ENCODE measurements at regions of chrX and their contacts with region 1.

Region 1: GRCh38 chrX:73855546-73855945 is 292.5 kb downstream of the CHIC1 start:
- DNase-seq: peak; percentile 52 to 54
- H3K4me3 ChIP-seq: no peak overlapping the region
- H3K27ac ChIP-seq: no peak overlapping the region
- H3K4me1 ChIP-seq: no peaks in the 10 kb centered on the region
- H3K27me3 ChIP-seq: no peaks in the 10 kb centered on the region
- CTCF ChIP-seq: peak in 5 of 6 experiments; percentile 42 to 83 (median 61)
- POLR2A ChIP-seq: no peak

Region 2: GRCh38 chrX:73668779-73669178 is 186.8 kb before region 1 on chrX:
- intact Hi-C with region 1: no loop called
- DNase-seq: peak; percentile 86 to 89
- H3K4me3 ChIP-seq: no peak overlapping the region
- H3K27ac ChIP-seq: peak overlapping the region; percentile 40 to 74 (median 56)
- H3K4me1 ChIP-seq: peaks cover 3 to 19% of the 10 kb centered on the region in 2 donors
- H3K27me3 ChIP-seq: no peaks in the 10 kb centered on the region
- CTCF ChIP-seq: no peak
- POLR2A ChIP-seq: no peak

Region 3: DNA sequence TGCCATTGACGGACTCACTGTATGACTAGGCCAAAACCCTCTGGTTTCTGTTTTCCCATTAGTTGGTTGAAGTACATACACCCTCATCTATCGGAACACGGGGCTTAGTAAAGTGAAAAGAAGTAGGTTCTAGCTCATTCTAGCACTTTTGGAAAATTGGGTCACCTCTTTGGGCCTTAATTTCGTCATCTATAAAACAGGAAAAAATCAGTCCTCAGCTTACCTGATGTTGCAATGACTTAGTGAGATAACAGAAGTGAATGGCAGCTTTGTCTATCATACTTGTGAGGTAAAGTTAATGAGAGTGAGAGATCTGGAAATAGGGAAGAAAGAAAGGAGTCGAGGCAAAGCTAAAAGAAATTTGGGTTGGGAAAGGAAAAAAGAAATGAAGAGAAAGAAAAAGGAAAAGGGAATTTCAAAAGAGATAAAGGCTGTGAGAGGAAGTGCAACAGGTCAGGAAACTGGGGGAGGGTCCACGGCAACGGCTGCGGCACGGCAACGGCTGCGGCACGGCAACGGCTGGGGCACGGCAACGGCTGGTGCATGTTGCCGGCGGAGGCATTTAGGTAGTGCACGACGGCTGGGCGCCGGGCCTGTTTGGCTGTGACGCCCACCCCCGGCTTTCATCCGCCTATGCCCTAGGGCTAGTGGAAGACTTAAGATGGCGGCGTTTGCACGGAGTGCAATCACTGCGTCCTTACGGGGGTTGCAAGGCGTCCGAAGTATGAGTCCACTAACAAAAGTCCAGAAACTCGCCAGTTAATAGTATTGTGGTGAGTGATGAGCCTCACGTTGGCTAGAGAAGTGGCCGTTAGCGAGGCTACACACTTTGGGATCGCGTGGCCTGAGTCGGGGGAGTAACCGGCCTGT is 88.4 kb after region 1 on chrX:
- intact Hi-C with region 1: loop called (anchors 10 kb)
- DNase-seq: peak; percentile 83 to 84
- H3K4me3 ChIP-seq: peak overlapping the region in 2 of 3 donors; percentile 60 to 65
- H3K27ac ChIP-seq: peak overlapping the region; percentile 1 to 83 (median 81)
- H3K4me1 ChIP-seq: peaks cover 3 to 5% of the 10 kb centered on the region in 2 donors
- H3K27me3 ChIP-seq: no peaks in the 10 kb centered on the region
- CTCF ChIP-seq: peak in 1 of 6 experiments; percentile 18
- POLR2A ChIP-seq: peak in 1 of 2 donors; percentile 82

Region 4: DNA sequence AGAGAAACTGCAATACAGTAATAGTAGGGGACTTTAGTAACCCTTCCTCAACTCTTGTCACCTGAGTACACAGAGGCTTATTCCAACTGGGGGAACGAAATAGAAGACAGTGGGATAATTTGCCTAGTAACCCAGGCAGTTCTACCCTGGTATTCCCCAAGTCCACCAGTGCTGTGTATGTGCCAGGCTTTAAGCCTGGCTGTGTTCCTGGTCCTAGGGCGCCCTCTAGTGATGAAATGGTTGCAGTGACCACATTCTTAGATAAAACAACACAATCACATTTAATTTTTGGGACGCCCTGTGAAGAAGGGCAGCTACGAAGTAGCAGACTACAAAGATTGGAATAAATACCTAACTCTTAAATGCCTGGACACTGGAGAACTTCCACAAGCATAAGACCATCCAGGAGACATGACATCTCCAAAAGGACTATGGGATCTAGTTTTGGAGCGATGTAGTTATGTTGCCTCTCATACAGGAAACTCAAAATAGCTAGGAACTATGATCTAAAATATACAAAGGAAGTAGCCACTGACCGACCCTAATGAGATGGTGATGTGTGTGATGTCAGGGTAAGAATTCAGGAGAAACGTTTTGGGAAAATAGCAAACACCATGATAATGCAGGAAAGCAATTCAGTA is 160.0 kb after region 1 on chrX:
- intact Hi-C with region 1: loop called (anchors 5 kb)
- DNase-seq: peak; percentile 52 to 62
- H3K4me3 ChIP-seq: no peak overlapping the region
- H3K27ac ChIP-seq: no peak overlapping the region
- H3K4me1 ChIP-seq: no peaks in the 10 kb centered on the region
- H3K27me3 ChIP-seq: no peaks in the 10 kb centered on the region
- CTCF ChIP-seq: peak; percentile 34 to 90 (median 66)
- POLR2A ChIP-seq: no peak

Region 5: DNA sequence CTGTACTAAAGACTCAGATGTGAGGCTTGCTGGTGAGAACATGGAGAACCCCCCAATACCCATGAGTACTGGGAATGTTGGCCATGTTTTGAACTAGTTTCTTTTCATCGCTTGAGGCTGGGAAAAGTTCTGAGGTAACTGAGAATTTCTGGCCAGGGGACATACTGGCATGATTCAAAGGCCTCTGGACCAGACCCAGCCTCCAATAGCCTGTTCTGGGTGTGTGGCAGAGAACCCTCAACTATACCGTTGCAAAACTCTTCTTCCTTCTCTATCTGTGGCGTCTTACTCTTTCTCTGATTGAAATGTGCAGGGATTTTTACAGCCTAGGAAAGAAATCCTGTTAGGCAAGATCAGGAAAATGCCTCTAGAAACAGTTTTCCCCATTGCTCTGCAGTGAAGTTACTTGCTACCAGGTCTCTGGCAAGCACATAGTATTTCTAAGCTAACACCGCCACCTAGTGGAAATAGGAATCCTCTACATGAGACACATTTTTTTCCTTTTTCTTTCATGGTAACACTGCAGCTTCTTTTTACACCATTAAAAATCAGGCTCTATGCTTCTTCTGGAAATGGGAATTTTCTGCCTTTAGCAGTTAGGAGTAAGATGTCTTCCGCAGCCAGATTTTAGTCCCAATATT is 277.7 kb after region 1 on chrX:
- intact Hi-C with region 1: loop called (anchors 10 kb)
- DNase-seq: no peak
- H3K4me3 ChIP-seq: no peak overlapping the region
- H3K27ac ChIP-seq: no peak overlapping the region
- H3K4me1 ChIP-seq: no peaks in the 10 kb centered on the region
- H3K27me3 ChIP-seq: no peaks in the 10 kb centered on the region
- CTCF ChIP-seq: peak; percentile 43 to 87 (median 62)
- POLR2A ChIP-seq: no peak

Region 6: DNA sequence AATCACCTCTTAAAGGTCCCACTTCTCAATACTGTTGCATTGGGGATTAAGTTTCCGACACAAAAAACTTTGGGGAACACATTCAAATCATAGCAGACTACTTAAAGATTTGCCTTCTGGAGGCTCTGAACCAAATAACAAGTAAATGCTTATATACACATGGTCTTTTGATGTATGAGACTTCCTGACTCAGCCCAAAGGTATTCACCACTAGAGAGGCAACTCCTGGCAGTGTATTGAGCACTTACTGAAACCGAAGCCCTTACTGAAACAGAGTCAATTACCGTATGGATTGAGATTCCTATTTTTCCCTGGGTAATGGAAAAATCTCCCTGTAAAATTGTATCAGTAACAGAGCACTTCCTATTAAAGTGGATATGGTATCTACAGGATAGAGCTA is 493.8 kb after region 1 on chrX:
- intact Hi-C with region 1: loop called (anchors 5 kb)
- DNase-seq: no peak
- H3K4me3 ChIP-seq: no peak overlapping the region
- H3K27ac ChIP-seq: no peak overlapping the region
- H3K4me1 ChIP-seq: no peaks in the 10 kb centered on the region
- H3K27me3 ChIP-seq: no peaks in the 10 kb centered on the region
- CTCF ChIP-seq: no peak
- POLR2A ChIP-seq: no peak